Common myeloid progenitor, CD34-positive (primary cell): ENCODE measurements at regions of chr3 and their contacts with region 1.

Region 1: GRCh38 chr3:14780927-14781507 is 37.7 kb upstream of the FGD5 start:
- DNase-seq: peak; percentile 80 to 85 (median 84)
- H3K4me3 ChIP-seq: no peak overlapping the region
- H3K27ac ChIP-seq: no peak overlapping the region
- H3K4me1 ChIP-seq: no peaks in the 10 kb centered on the region
- H3K27me3 ChIP-seq: no peaks in the 10 kb centered on the region

Region 2: GRCh38 chr3:14424711-14425341 is 356.2 kb before region 1 on chr3:
- CTCF ChIA-PET with region 1: no interaction called
- POLR2A ChIA-PET with region 1: no interaction called
- DNase-seq: peak; percentile 63 to 89 (median 87)
- H3K4me3 ChIP-seq: peak overlapping the region in 3 of 7 experiments; percentile 4 to 20 (median 15)
- H3K27ac ChIP-seq: peak overlapping the region in 1 of 2 experiments; percentile 58
- H3K4me1 ChIP-seq: peaks cover 12 to 74% (median 70%) of the 10 kb centered on the region in 4 experiments
- H3K27me3 ChIP-seq: no peaks in the 10 kb centered on the region

Region 3: DNA sequence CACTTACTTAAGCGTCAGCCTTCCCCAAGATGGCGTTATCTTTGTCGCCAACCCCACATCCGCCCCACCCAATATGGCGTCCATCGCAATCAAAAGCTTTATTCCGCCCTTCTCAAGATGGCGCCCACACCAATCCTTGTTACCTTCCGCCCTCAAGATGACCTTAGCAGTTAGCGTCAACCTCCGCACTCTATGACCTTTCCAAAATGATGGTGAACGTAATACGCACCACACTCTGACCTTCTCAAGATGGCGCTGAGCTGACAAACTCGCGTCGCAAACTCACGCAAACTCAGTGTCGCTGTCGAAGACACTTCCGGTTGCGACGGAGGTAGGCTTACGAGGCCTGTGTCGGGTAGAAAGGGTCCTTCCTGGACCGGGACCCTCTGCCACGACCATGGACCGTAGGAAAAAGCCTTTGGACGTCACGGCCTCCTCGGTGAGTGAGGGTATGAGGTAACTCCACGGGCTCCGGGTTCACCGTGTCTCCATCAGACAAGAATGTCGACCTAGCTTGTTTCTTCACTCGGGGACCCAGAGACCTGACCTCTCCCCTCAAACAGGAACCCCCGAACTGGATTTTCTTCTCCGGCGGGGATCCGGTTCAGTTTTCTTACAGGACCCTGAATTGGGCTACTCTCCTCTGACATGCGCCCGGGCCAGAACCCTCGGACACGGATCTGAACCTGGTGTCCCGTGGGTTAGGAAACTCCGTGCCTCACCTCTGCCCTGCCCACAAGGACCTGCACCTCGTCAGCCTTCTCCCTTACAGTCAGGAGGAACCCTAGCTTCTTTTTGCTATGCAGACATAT is 129.4 kb before region 1 on chr3 and contains the start of gene CCDC174:
- CTCF ChIA-PET with region 1: interaction called, 12 read pairs
- POLR2A ChIA-PET with region 1: no interaction called
- DNase-seq: peak; percentile 100
- H3K4me3 ChIP-seq: peak within 1 kb of the TSS; percentile 84 to 95 (median 87)
- H3K27ac ChIP-seq: peak within 1 kb of the TSS; percentile 98
- H3K4me1 ChIP-seq: peaks cover 9 to 46% (median 24%) of the 10 kb centered on the region in 4 experiments
- H3K27me3 ChIP-seq: no peaks in the 10 kb centered on the region

Region 4: DNA sequence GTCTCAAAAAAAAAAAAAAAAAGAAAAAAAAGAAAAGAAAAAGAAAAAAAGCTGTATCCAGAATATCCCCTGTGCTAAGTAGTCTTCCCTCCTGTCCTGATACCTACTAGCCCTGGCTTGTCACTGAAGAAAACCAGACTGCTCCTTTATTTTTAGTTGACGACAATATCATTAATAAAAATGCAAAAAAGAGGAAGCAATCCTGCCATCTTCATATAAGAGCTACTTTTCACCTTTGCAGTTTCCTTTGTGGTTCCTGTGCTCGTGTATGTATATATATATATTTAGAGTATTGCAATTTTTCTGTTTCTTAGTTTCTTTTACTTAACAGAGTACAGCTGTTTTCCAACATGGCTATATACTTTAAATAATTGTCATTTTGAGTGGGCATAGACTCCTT is 92.5 kb before region 1 on chr3:
- CTCF ChIA-PET with region 1: interaction called, 25 read pairs
- POLR2A ChIA-PET with region 1: no interaction called
- DNase-seq: peak; percentile 28 to 79 (median 75)
- H3K4me3 ChIP-seq: peak overlapping the region in 1 of 7 experiments; percentile 7
- H3K27ac ChIP-seq: no peak overlapping the region
- H3K4me1 ChIP-seq: peaks cover 21 to 62% (median 50%) of the 10 kb centered on the region in 4 experiments
- H3K27me3 ChIP-seq: no peaks in the 10 kb centered on the region

Region 5: DNA sequence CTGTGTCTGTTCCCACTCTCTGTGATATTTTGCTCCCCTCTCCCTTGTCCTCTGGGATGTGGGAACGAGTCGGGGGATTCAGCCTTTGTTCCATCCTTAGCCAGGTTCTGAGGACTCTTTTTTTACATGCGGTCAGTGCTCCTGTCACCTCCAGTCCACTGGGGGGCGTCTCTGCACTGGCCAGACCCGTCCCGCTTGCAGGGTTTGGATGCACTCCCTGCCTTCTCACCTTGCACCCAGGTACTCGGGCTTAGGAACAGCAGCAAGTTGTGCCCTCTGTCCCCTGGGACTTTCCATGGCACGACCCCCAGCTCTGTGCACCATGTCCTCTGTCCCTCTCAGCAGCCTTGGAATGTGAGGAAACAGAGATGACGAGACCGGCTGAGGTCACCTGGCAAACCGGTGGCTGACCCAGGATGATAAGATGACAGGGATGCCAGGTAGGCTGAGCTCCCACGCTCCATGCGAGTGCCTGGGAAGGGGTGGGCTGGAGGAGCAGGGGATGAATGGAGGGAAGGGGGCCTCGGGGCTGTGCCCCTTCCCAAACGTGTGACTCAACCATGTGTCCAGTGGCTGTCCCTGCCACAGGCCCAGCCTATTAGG is 10.4 kb after region 1 on chr3:
- CTCF ChIA-PET with region 1: interaction called, 25 read pairs
- POLR2A ChIA-PET with region 1: no interaction called
- DNase-seq: peak; percentile 61 to 77 (median 74)
- H3K4me3 ChIP-seq: no peak overlapping the region
- H3K27ac ChIP-seq: no peak overlapping the region
- H3K4me1 ChIP-seq: peaks cover 0 to 11% (median 3%) of the 10 kb centered on the region in 4 experiments
- H3K27me3 ChIP-seq: no peaks in the 10 kb centered on the region

Region 6: GRCh38 chr3:15042936-15043335 is 261.9 kb after region 1 on chr3:
- CTCF ChIA-PET with region 1: no interaction called
- POLR2A ChIA-PET with region 1: no interaction called
- DNase-seq: no peak
- H3K4me3 ChIP-seq: no peak overlapping the region
- H3K27ac ChIP-seq: no peak overlapping the region
- H3K4me1 ChIP-seq: peaks cover 3 to 15% (median 5%) of the 10 kb centered on the region in 4 experiments
- H3K27me3 ChIP-seq: no peaks in the 10 kb centered on the region